CD14-positive monocyte (primary cell): ENCODE measurements at regions of chr10 and their contacts with region 1.

Region 1: DNA sequence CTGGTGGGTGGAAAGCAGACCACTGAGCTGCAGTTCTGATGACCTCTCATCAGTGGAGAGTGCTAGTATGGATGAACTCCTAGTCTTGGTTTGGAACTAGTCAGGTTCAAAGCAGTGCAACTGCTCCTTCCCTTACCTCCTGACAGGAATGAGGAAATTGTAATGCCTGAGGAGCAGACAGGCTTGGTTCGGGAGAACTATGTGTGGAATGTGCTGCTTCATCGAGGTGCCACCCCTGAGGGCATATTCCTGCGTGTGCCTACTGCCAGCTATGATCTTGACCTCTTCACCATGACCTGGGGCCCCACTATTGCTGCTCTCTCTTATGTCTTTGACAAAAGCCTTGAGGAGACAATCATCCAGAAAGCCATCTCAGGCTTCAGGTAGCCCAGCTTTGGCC is 27.4 kb upstream of the NFKB2 start:
- DNase-seq: no peak
- H3K4me3 ChIP-seq: no peak overlapping the region
- H3K4me3 Mint-ChIP-seq: no peak overlapping the region
- H3K27ac ChIP-seq: no peak overlapping the region
- H3K27ac Mint-ChIP-seq: no peak overlapping the region
- H3K4me1 ChIP-seq: no peaks in the 10 kb centered on the region
- H3K4me1 Mint-ChIP-seq: no peaks in the 10 kb centered on the region
- H3K27me3 ChIP-seq: no peaks in the 10 kb centered on the region
- H3K27me3 Mint-ChIP-seq: peaks cover 0 to 2% (median 0%) of the 10 kb centered on the region in 3 donors
- CTCF ChIP-seq: no peak

Region 2: DNA sequence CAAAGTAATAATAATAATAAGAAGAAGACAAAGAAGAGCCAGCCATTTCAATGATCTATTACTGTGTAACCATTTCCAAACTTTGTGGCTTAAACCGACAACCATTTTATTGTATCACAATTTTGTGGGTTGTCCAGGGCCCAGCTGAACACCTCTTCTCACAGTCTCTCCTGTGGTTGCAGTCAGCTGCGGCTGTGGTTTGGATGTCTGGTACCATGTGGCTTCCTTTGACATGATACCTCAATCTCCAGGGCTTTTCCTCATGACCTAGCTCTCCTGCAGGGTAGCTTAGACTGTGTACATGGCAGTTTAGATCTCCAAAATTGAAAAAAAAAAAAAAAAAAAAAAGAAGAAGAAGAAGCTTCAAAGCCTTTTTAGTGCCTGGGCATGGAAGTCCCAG is 45.2 kb before region 1 on chr10:
- intact Hi-C with region 1: no loop called
- DNase-seq: no peak
- H3K4me3 ChIP-seq: no peak overlapping the region
- H3K4me3 Mint-ChIP-seq: no peak overlapping the region
- H3K27ac ChIP-seq: no peak overlapping the region
- H3K27ac Mint-ChIP-seq: peak overlapping the region in 1 of 7 donors; percentile 8
- H3K4me1 ChIP-seq: no peaks in the 10 kb centered on the region
- H3K4me1 Mint-ChIP-seq: peaks cover 8% of the 10 kb centered on the region
- H3K27me3 ChIP-seq: no peaks in the 10 kb centered on the region
- H3K27me3 Mint-ChIP-seq: no peaks in the 10 kb centered on the region
- CTCF ChIP-seq: no peak

Region 3: GRCh38 chr10:102399217-102400089 is 31.4 kb after region 1 on chr10:
- intact Hi-C with region 1: no loop called
- DNase-seq: peak; percentile 87 to 92 (median 91)
- H3K4me3 ChIP-seq: peak overlapping the region; percentile 12 to 68 (median 25)
- H3K4me3 Mint-ChIP-seq: peak overlapping the region; percentile 48 to 50
- H3K27ac ChIP-seq: peak overlapping the region; percentile 50 to 71
- H3K27ac Mint-ChIP-seq: peak overlapping the region; percentile 32 to 88 (median 75)
- H3K4me1 ChIP-seq: peaks cover 26 to 40% of the 10 kb centered on the region in 2 donors
- H3K4me1 Mint-ChIP-seq: peaks cover 30% of the 10 kb centered on the region
- H3K27me3 ChIP-seq: no peaks in the 10 kb centered on the region
- H3K27me3 Mint-ChIP-seq: peaks cover 0 to 4% (median 3%) of the 10 kb centered on the region in 3 donors
- CTCF ChIP-seq: peak; percentile 96

Region 4: DNA sequence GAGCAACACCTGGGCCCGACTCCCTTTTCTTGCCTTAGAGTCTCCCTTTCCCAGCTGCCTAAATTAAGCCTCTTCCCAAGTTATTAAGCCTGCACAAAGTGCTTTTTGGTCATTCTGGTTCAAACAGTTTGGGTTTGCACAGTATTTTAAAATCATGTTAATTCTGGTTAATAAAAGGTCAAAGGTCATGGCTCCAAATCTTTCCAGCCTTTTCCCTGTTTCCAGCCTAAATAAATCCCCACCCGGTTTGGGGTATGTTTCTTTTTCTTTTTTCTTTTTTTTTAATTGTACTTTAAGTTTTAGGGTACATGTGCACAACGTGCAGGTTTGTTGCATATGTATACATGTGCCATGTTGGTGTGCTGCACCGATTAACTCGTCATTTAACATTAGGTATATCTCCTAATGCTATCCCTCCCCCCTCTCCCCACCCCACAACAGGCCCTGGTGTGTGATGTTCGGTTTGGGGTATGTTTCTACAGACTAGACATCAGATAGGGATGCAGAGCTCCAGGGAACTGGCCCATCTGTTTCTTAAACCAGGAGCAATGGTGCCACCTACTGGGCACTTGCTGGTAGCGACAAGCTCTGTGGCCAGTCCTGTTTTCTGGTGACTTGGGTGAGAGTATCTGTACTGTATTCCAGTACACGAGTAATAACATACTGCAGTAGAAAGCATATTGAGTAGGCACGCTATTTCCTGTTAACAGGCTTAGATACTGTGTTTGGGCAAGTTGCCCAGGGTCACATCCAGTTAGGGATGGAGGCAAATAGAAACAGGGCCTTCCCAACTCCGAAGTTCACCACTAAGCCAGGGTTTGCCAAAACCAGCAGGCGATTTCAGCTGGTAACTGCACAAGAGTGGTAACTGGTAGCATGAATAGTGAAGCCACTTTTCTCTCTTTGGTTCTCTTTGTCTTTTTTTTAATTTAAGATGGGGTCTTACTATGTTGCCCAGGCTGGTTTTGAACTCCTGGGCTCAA is 215.7 kb after region 1 on chr10:
- intact Hi-C with region 1: loop called in 1 of 2 experiments (anchors 10 kb)
- DNase-seq: peak; percentile 68 to 85 (median 78)
- H3K4me3 ChIP-seq: no peak overlapping the region
- H3K4me3 Mint-ChIP-seq: no peak overlapping the region
- H3K27ac ChIP-seq: no peak overlapping the region
- H3K27ac Mint-ChIP-seq: no peak overlapping the region
- H3K4me1 ChIP-seq: peaks cover 19% of the 10 kb centered on the region in 2 donors
- H3K4me1 Mint-ChIP-seq: peaks cover 23% of the 10 kb centered on the region
- H3K27me3 ChIP-seq: no peaks in the 10 kb centered on the region
- H3K27me3 Mint-ChIP-seq: peaks cover 0 to 3% (median 0%) of the 10 kb centered on the region in 3 donors
- CTCF ChIP-seq: peak; percentile 87